ENCODE measurements at regions of chr5 and their contacts with region 1.

Region 1: GRCh38 chr5:132753135-132753987 is 6.1 kb downstream of the CCNI2 start:
- DNase-seq: no peak
- H3K4me3 ChIP-seq: no peak overlapping the region
- CTCF ChIP-seq: peak; percentile 23

Region 2: DNA sequence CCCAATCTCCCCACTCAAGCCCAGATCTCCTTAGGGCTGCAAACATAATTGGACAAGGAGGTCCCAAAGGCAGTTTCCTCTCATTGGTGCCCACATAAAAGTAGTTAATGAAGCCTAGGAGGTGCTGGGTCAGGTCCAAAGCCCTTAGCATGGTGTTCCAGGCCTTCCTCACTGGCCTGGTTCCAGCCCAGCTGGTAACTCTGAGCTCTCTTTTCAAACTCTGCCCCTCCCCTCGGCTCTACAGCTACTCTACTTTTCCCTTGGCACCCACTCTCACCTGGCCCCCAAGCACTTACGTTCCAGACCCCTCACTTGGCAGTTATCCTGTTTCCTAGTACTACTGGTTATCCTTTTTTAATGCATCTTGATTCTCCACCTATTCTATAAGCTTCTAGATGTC is 13.8 kb after region 1 on chr5:
- CTCF ChIA-PET with region 1: interaction called, 36 read pairs
- POLR2A ChIA-PET with region 1: interaction called, 5 read pairs
- DNase-seq: no peak
- H3K4me3 ChIP-seq: no peak overlapping the region
- CTCF ChIP-seq: no peak

Region 3: DNA sequence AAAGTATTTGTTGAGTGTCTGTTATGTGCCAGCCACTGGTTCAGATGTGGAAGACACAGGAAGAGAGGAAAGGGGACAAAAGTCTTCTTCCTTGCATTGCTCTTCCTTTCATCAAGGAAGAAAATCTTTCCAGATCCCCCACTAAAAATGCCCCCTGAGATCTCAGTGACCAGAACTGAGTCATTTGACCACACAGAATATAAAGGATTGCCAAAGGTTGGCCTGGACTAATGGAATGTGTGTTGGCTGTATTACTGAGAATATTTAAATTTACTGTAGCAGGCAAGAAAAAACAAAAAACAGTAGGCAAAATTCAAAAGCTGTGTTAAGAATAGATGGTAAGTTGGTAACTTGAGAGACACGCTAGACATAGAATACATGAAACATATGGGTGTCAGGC is 33.7 kb after region 1 on chr5:
- CTCF ChIA-PET with region 1: interaction called, 10 read pairs
- POLR2A ChIA-PET with region 1: no interaction called
- DNase-seq: no peak
- H3K4me3 ChIP-seq: no peak overlapping the region
- CTCF ChIP-seq: no peak

Region 4: DNA sequence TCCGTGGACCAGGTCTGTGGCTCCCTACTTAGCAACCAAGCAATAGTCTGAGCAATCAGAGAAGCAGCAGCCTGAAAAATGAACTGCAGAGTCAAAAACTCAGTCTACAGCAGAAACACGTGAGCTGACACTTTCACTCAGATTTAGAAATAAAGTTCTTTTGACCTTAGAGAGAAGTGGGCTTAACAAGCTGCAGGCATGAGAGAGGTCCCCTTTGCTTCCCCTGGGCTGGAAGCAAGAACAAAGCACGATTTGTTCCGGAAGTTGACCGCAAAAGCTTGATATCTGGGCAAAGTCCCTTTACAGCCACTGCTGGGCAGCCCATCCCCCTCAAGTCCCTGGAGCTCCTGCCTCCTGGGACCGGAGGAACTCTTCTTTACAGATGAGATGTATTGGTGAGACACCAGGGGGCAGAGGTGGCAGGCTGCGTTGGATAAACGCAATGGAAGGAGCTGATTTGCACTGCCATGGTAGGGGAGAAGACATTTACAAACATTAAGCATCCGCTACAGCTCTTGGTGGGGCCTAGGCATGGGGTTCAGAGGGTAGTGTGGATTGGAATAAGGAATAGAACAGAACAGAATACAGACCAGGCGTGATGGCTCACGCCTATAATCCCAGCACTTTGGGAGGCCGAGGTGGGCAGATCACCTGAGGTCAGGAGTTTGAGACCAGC is 53.9 kb after region 1 on chr5:
- CTCF ChIA-PET with region 1: interaction called, 12 read pairs
- POLR2A ChIA-PET with region 1: no interaction called
- DNase-seq: no peak
- H3K4me3 ChIP-seq: no peak overlapping the region
- CTCF ChIP-seq: no peak

Measured in AG04449 (cell line).